PC-9 (cell line): ENCODE measurements at regions of chr3 and their contacts with region 1.

Region 1: DNA sequence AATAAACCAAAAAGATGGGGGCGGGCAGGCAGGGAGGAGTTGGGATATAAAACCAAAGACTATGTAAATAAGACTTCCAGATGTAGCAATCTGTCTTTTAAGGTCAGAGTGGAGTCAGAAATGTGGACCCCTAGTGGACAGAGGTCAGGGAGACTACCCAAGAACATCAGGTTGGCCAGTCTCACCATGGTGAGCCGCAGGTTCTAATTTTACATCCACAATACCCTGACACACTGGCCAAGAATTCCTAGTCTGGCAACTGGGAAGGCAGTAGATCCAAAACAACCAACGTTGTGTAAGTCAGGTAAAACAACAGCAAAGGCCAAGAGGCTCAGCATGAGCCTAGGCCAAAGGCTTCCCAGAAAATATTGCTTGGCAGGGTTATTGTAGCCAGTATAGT is 203.4 kb downstream of the FOXP1 start:
- DNase-seq: no peak
- H3K4me3 ChIP-seq: no peak overlapping the region
- H3K27ac ChIP-seq: no peak overlapping the region
- H3K4me1 ChIP-seq: no peaks in the 10 kb centered on the region
- H3K27me3 ChIP-seq: no peaks in the 10 kb centered on the region
- CTCF ChIP-seq: no peak

Region 2: DNA sequence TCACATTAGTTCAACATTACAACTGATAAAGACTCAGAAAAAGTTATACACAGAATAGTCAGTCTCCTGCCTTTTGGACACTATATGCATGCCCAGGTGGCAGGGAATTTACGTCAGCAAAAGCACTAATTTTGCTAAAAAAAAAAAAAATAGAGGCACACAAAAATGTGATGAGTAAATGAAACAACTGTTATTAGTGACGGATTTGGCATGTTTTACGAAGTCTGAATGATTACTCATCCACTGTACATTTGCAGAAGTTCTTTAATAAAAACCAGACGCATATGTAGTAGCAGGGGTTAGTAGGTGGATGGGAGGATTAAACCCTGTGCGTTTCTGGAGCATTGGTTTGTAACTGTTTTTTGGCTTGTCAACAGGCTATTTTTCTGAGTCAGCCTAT is 1541.9 kb before region 1 on chr3:
- CTCF ChIA-PET with region 1: interaction called, 13 read pairs
- POLR2A ChIA-PET with region 1: no interaction called
- intact Hi-C with region 1: no loop called
- DNase-seq: no peak
- H3K4me3 ChIP-seq: no peak overlapping the region
- H3K27ac ChIP-seq: no peak overlapping the region
- H3K4me1 ChIP-seq: no peaks in the 10 kb centered on the region
- H3K27me3 ChIP-seq: no peaks in the 10 kb centered on the region
- CTCF ChIP-seq: no peak

Region 3: GRCh38 chr3:71185733-71186455 is 194.2 kb before region 1 on chr3:
- CTCF ChIA-PET with region 1: no interaction called
- POLR2A ChIA-PET with region 1: no interaction called
- intact Hi-C with region 1: no loop called
- DNase-seq: no peak
- H3K4me3 ChIP-seq: no peak overlapping the region
- H3K27ac ChIP-seq: no peak overlapping the region
- H3K4me1 ChIP-seq: no peaks in the 10 kb centered on the region
- H3K27me3 ChIP-seq: no peaks in the 10 kb centered on the region
- CTCF ChIP-seq: no peak

Region 4: DNA sequence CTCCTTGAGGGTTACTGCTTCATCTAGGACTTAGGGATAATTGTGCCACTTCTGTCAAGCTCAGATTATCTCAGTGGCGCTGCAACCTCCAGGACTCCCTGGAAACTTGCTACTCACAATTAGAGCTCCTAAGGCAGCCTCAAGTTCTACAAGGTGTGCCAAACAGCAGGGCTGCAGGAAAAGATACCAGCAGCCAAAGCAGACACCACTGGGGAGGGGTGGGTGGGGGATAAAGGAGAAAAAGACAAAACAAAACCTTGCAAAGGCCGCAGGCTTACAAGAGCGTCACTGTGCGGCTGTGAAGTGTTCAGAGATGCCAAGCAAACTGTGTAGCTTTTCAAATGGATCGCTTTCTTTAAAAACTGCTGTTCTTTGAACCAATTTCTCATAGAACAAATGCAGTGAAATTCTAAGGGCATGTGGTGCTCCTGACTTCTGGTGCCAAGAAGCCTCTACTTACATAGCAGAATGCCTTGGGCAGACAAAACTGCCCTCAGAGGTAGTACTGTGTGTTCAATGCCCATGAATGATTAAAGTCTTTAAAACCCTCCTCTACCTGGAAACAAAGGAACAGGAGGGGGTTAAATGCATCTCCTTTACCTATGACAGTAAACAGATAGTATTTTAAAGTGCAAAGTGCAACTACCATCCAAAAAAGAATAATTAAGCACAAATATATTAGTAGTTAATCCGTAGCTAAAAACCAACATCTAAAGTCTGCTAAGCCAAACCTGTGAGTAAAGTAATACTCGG is 150.0 kb before region 1 on chr3:
- CTCF ChIA-PET with region 1: no interaction called
- POLR2A ChIA-PET with region 1: no interaction called
- intact Hi-C with region 1: no loop called
- DNase-seq: no peak
- H3K4me3 ChIP-seq: no peak overlapping the region
- H3K27ac ChIP-seq: no peak overlapping the region
- H3K4me1 ChIP-seq: no peaks in the 10 kb centered on the region
- H3K27me3 ChIP-seq: no peaks in the 10 kb centered on the region
- CTCF ChIP-seq: no peak

Region 5: DNA sequence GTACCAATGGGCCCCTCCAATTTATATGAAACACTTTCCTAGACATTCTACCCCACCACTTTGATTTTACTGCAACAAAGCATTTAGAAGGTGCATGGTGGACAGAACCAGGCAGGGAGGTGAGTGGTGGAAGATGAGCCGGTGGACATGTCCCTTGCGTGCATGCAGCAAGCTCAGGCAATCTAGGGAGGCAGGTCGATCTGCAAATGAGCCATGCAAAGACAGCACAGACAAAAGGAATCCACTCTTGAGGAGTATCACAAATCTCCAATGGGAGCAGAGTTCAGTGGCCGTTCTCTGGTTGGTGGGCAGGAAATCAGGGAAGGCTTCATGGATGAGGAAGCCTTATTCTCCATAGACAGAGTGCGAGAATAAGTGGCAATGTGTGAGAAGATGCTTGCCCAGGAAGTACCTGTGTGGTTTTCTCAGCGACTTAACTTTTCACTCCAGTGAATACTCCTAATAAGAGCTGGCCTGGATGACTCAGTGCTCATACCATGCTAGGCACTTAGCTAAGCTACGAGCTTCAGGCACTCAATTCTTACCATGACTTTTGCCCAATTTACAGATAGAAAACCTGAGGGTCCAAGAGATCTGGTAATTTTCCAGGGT is 51.0 kb after region 1 on chr3:
- CTCF ChIA-PET with region 1: no interaction called
- POLR2A ChIA-PET with region 1: no interaction called
- intact Hi-C with region 1: no loop called
- DNase-seq: peak in 1 of 2 experiments; percentile 56
- H3K4me3 ChIP-seq: no peak overlapping the region
- H3K27ac ChIP-seq: no peak overlapping the region
- H3K4me1 ChIP-seq: no peaks in the 10 kb centered on the region
- H3K27me3 ChIP-seq: no peaks in the 10 kb centered on the region
- CTCF ChIP-seq: no peak

Region 6: GRCh38 chr3:71466483-71466882 is 86.4 kb after region 1 on chr3:
- CTCF ChIA-PET with region 1: no interaction called
- POLR2A ChIA-PET with region 1: no interaction called
- intact Hi-C with region 1: no loop called
- DNase-seq: peak; percentile 59 to 67
- H3K4me3 ChIP-seq: peak overlapping the region; percentile 15; the same call in 1 of the 2 replicates
- H3K27ac ChIP-seq: peak overlapping the region; percentile 41
- H3K4me1 ChIP-seq: peaks cover 28% of the 10 kb centered on the region
- H3K27me3 ChIP-seq: no peaks in the 10 kb centered on the region
- CTCF ChIP-seq: no peak